ENCODE measurements at regions of chr14 and their contacts with region 1.

Region 1: GRCh38 chr14:69652942-69653684 is 41.7 kb downstream of the SUSD6 start:
- DNase-seq: no peak
- H3K4me3 ChIP-seq: no peak overlapping the region
- H3K27ac ChIP-seq: peak overlapping the region; percentile 46 to 94 (median 87)
- H3K4me1 ChIP-seq: peaks cover 70 to 89% of the 10 kb centered on the region in 2 donors
- H3K27me3 ChIP-seq: no peaks in the 10 kb centered on the region
- CTCF ChIP-seq: no peak
- POLR2A ChIP-seq: no peak

Region 2: GRCh38 chr14:69501423-69501838 is 151.7 kb before region 1 on chr14:
- intact Hi-C with region 1: no loop called
- DNase-seq: peak; percentile 88 to 91
- H3K4me3 ChIP-seq: no peak overlapping the region
- H3K27ac ChIP-seq: peak overlapping the region in 2 of 3 donors; percentile 20 to 46
- H3K4me1 ChIP-seq: peaks cover 26 to 33% of the 10 kb centered on the region in 2 donors
- H3K27me3 ChIP-seq: no peaks in the 10 kb centered on the region
- CTCF ChIP-seq: no peak
- POLR2A ChIP-seq: no peak

Region 3: DNA sequence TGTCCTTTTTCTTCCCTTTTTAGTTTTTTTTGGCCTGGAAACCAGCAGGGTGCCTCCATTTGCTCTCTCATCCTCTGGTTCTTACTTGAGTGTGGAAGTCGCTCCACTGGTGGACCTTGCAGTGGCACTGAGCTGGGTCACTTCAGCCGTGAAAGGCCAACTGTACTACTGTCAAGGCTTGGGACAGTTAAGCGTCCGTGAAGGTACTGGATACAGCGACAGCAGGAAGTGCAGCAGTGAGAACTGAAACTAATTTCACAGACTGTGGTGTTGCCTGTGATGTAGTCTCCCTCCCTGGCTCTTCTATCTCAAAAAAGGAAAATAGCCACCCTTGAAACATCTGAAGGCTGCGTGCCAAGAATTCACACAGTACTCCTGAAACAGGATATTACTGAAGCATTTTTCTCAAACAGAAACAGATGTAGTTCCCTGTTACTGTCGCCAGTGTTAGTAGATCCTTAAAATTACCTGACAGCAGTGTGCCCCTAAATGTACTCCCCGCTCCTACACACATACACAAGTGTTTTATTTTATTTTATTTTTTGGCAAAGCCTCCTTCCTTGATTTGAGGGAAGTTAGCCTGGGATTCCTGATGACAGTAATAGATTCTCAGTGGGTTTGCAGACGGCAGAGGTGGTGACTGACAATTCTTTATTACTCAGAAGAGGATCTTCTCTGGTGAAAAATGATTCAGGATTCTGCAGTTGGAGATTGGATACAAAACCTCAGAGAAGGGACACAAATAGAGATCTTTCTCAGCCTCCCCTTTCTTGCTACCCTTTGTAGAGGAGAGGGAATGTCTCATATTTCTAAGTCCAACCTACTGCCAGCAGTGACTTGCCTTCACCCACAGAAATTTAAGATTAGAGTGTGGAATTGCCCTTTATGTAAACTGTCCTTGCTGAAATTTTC is 37.4 kb before region 1 on chr14:
- intact Hi-C with region 1: loop called (anchors 5 kb)
- DNase-seq: peak; percentile 77 to 86
- H3K4me3 ChIP-seq: no peak overlapping the region
- H3K27ac ChIP-seq: peak overlapping the region; percentile 76 to 96 (median 82)
- H3K4me1 ChIP-seq: peaks cover 72 to 77% of the 10 kb centered on the region in 2 donors
- H3K27me3 ChIP-seq: no peaks in the 10 kb centered on the region
- CTCF ChIP-seq: peak in 2 of 6 experiments; percentile 29 to 39
- POLR2A ChIP-seq: peak in 1 of 2 donors; percentile 19

Region 4: GRCh38 chr14:69673578-69674305 is 20.6 kb after region 1 on chr14:
- intact Hi-C with region 1: no loop called
- DNase-seq: no peak
- H3K4me3 ChIP-seq: no peak overlapping the region
- H3K27ac ChIP-seq: peak overlapping the region; percentile 28 to 71 (median 63)
- H3K4me1 ChIP-seq: peaks cover 59 to 68% of the 10 kb centered on the region in 2 donors
- H3K27me3 ChIP-seq: no peaks in the 10 kb centered on the region
- CTCF ChIP-seq: no peak
- POLR2A ChIP-seq: no peak

Region 5: GRCh38 chr14:69715725-69716477 is 62.8 kb after region 1 on chr14:
- intact Hi-C with region 1: loop called (anchors 10 kb)
- DNase-seq: peak; percentile 86 to 91
- H3K4me3 ChIP-seq: no peak overlapping the region
- H3K27ac ChIP-seq: peak overlapping the region; percentile 51 to 71 (median 62)
- H3K4me1 ChIP-seq: peaks cover 55 to 78% of the 10 kb centered on the region in 2 donors
- H3K27me3 ChIP-seq: no peaks in the 10 kb centered on the region
- CTCF ChIP-seq: no peak
- POLR2A ChIP-seq: no peak